CD4-positive, alpha-beta memory T cell (primary cell): ENCODE measurements at regions of chr14 and their contacts with region 1.

Region 1: GRCh38 chr14:88189417-88190191 is 133.5 kb downstream of the KCNK10 start:
- DNase-seq: peak in 4 of 5 donors; percentile 29 to 41 (median 36)
- H3K4me3 ChIP-seq: no peak overlapping the region
- H3K4me3 Mint-ChIP-seq: peak overlapping the region; percentile 47 to 84 (median 68)
- H3K27ac ChIP-seq: no peak overlapping the region
- H3K27ac Mint-ChIP-seq: peak overlapping the region in 1 of 7 donors; percentile 30
- H3K4me1 ChIP-seq: peaks cover 6% of the 10 kb centered on the region
- H3K4me1 Mint-ChIP-seq: peaks cover 3 to 8% (median 5%) of the 10 kb centered on the region in 4 donors
- H3K27me3 ChIP-seq: no peaks in the 10 kb centered on the region
- H3K27me3 Mint-ChIP-seq: peaks cover 15% of the 10 kb centered on the region in 2 donors

Region 2: DNA sequence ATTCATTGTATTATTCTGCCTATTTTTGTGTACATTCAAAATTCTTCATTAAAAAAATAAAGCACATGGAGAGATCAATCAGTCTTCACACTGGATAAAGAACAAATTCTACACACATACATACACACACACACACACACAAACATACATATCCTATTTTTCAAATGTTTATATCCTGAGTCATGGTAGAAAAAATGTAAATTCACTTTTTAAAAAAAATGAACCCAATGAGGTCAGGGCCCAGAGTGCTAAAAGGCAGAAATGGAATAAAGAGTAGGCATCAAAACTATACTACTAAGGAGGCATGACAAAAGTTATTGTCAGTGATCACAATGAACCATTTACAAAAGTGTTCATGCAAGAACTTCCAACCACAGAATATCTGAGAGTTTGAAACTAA is 214.0 kb before region 1 on chr14:
- CTCF ChIA-PET with region 1: no interaction called
- POLR2A ChIA-PET with region 1: no interaction called
- intact Hi-C with region 1: no loop called
- DNase-seq: no peak
- H3K4me3 ChIP-seq: no peak overlapping the region
- H3K4me3 Mint-ChIP-seq: no peak overlapping the region
- H3K27ac ChIP-seq: no peak overlapping the region
- H3K27ac Mint-ChIP-seq: no peak overlapping the region
- H3K4me1 ChIP-seq: no peaks in the 10 kb centered on the region
- H3K4me1 Mint-ChIP-seq: peaks cover 0 to 11% (median 4%) of the 10 kb centered on the region in 4 donors
- H3K27me3 ChIP-seq: no peaks in the 10 kb centered on the region
- H3K27me3 Mint-ChIP-seq: no peaks in the 10 kb centered on the region

Region 3: DNA sequence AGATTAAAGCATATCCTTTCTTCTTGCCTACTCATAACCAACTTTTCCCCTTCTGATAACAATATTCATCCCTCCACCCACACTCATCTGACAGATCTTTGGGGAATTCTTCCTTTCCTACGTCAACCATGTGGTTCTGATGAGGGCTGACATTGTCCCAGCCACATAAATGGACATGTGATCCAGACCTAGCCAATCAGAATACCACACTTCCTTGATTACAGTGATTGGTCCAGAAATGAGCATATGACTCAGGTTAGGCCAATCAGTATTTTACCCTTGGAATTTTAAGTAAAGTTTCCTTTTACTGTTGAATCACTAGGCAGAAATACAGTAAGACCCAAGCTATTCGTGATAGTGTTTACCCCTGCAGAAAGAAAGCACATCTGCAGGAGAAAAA is 125.8 kb before region 1 on chr14:
- CTCF ChIA-PET with region 1: no interaction called
- POLR2A ChIA-PET with region 1: no interaction called
- intact Hi-C with region 1: no loop called
- DNase-seq: no peak
- H3K4me3 ChIP-seq: no peak overlapping the region
- H3K4me3 Mint-ChIP-seq: no peak overlapping the region
- H3K27ac ChIP-seq: no peak overlapping the region
- H3K27ac Mint-ChIP-seq: no peak overlapping the region
- H3K4me1 ChIP-seq: no peaks in the 10 kb centered on the region
- H3K4me1 Mint-ChIP-seq: no peaks in the 10 kb centered on the region
- H3K27me3 ChIP-seq: no peaks in the 10 kb centered on the region
- H3K27me3 Mint-ChIP-seq: peaks cover 0 to 2% of the 10 kb centered on the region in 2 donors

Region 4: GRCh38 chr14:88204214-88204613 is 14.6 kb after region 1 on chr14:
- CTCF ChIA-PET with region 1: interaction called, 12 read pairs
- POLR2A ChIA-PET with region 1: no interaction called
- intact Hi-C with region 1: no loop called
- DNase-seq: no peak
- H3K4me3 ChIP-seq: no peak overlapping the region
- H3K4me3 Mint-ChIP-seq: no peak overlapping the region
- H3K27ac ChIP-seq: no peak overlapping the region
- H3K27ac Mint-ChIP-seq: no peak overlapping the region
- H3K4me1 ChIP-seq: no peaks in the 10 kb centered on the region
- H3K4me1 Mint-ChIP-seq: peaks cover 0 to 3% (median 0%) of the 10 kb centered on the region in 4 donors
- H3K27me3 ChIP-seq: no peaks in the 10 kb centered on the region
- H3K27me3 Mint-ChIP-seq: peaks cover 18 to 20% of the 10 kb centered on the region in 2 donors

Region 5: GRCh38 chr14:88380405-88380804 is 190.8 kb after region 1 on chr14:
- CTCF ChIA-PET with region 1: interaction called, 9 read pairs
- POLR2A ChIA-PET with region 1: no interaction called
- intact Hi-C with region 1: loop called (anchors 5 kb)
- DNase-seq: no peak
- H3K4me3 ChIP-seq: no peak overlapping the region
- H3K4me3 Mint-ChIP-seq: no peak overlapping the region
- H3K27ac ChIP-seq: no peak overlapping the region
- H3K27ac Mint-ChIP-seq: no peak overlapping the region
- H3K4me1 ChIP-seq: peaks cover 6% of the 10 kb centered on the region
- H3K4me1 Mint-ChIP-seq: peaks cover 3 to 11% (median 8%) of the 10 kb centered on the region in 4 donors
- H3K27me3 ChIP-seq: no peaks in the 10 kb centered on the region
- H3K27me3 Mint-ChIP-seq: peaks cover 0 to 2% of the 10 kb centered on the region in 2 donors